ENCODE measurements at regions of chr7 and their contacts with region 1.

Region 1: GRCh38 chr7:100889761-100890634 is 483 bp upstream of the UFSP1 start:
- DNase-seq: peak; percentile 87 to 93 (median 91)
- ATAC-seq: peak; percentile 93
- H3K4me3 ChIP-seq: peak overlapping the region; percentile 80
- H3K4me3 Mint-ChIP-seq: peak overlapping the region; percentile 80 to 90 (median 88)
- H3K27ac ChIP-seq: peak overlapping the region; percentile 66
- H3K27ac Mint-ChIP-seq: peak overlapping the region in 6 of 9 donors; percentile 14 to 95 (median 76)
- H3K4me1 ChIP-seq: peaks cover 31 to 45% of the 10 kb centered on the region in 2 donors
- H3K4me1 Mint-ChIP-seq: peaks cover 32 to 48% (median 41%) of the 10 kb centered on the region in 7 donors
- H3K27me3 ChIP-seq: no peaks in the 10 kb centered on the region
- H3K27me3 Mint-ChIP-seq: peaks cover 16 to 40% (median 22%) of the 10 kb centered on the region in 5 donors

Region 2: DNA sequence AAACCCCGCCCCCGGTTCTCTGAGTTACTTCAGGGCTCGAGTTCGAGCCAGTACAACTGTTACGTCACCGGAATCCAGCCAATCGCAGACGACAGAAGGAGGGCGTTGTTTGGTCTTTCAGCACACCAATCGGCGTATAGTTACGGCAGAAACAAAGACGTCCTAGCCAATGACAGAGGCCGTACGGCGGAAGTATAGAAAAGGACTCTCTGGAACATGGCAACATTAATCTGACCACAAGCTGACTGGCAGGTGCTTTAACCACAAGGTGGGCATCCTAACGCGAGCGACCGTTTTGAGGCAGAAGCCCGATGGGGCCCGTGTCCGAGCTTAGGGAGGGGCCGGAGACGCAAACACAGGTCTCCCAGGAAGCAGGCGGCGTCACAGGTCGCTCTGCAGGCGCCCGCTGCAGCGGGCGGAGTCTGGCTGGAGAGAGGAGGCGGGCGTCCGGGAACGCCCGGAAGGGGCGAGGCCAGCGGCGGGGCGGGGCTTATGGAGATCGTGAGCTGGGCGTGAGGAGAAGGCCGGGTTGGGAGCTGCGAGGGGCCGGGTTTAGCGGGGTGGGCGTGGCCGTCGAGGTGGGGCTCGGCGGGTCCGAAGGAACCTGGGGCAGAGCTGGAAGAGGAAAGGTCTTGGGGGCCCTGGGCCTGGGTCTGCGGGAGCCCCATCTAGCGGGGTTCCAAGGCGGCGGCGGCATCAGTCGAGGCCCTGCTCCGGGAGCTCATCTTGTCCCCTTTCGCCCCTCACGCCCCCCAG is 277.8 kb before region 1 on chr7 and contains the start of gene MOSPD3:
- CTCF ChIA-PET with region 1: no interaction called
- POLR2A ChIA-PET with region 1: no interaction called
- intact Hi-C with region 1: loop called in 1 of 2 experiments (anchors 5 kb)
- DNase-seq: peak; percentile 97 to 99 (median 98)
- ATAC-seq: peak; percentile 94
- H3K4me3 ChIP-seq: peak within 1 kb of the TSS; percentile 99
- H3K4me3 Mint-ChIP-seq: peak within 1 kb of the TSS; percentile 92 to 99 (median 98)
- H3K27ac ChIP-seq: peak within 1 kb of the TSS; percentile 92
- H3K27ac Mint-ChIP-seq: peak within 1 kb of the TSS; percentile 97 to 100 (median 100)
- H3K4me1 ChIP-seq: peaks cover 10 to 16% of the 10 kb centered on the region in 2 donors
- H3K4me1 Mint-ChIP-seq: peaks cover 18 to 29% (median 24%) of the 10 kb centered on the region in 7 donors
- H3K27me3 ChIP-seq: no peaks in the 10 kb centered on the region
- H3K27me3 Mint-ChIP-seq: peaks cover 0 to 8% (median 0%) of the 10 kb centered on the region in 5 donors
- total RNA-seq, gene MOSPD3: 8.8 to 54.9 (median 13.1) TPM

Region 3: GRCh38 chr7:100965723-100966541 is 75.9 kb after region 1 on chr7:
- CTCF ChIA-PET with region 1: no interaction called
- POLR2A ChIA-PET with region 1: no interaction called
- intact Hi-C with region 1: loop called (anchors 5 kb)
- DNase-seq: peak; percentile 21 to 88 (median 52)
- ATAC-seq: peak; percentile 73
- H3K4me3 ChIP-seq: peak overlapping the region; percentile 52
- H3K4me3 Mint-ChIP-seq: peak overlapping the region; percentile 71 to 89 (median 84)
- H3K27ac ChIP-seq: no peak overlapping the region
- H3K27ac Mint-ChIP-seq: peak overlapping the region in 1 of 9 donors; percentile 6
- H3K4me1 ChIP-seq: peaks cover 0 to 17% of the 10 kb centered on the region in 2 donors
- H3K4me1 Mint-ChIP-seq: peaks cover 9 to 24% (median 16%) of the 10 kb centered on the region in 7 donors
- H3K27me3 ChIP-seq: peaks cover 12 to 33% of the 10 kb centered on the region in 2 donors
- H3K27me3 Mint-ChIP-seq: peaks cover 42 to 65% (median 61%) of the 10 kb centered on the region in 5 donors

Region 4: GRCh38 chr7:101085162-101085987 is 195.4 kb after region 1 on chr7 and contains the start of gene TRIM56:
- CTCF ChIA-PET with region 1: interaction called, 3 read pairs
- POLR2A ChIA-PET with region 1: interaction called, 12 read pairs
- intact Hi-C with region 1: no loop called
- DNase-seq: peak; percentile 53 to 77 (median 74)
- ATAC-seq: peak; percentile 94
- H3K4me3 ChIP-seq: peak within 1 kb of the TSS; percentile 100
- H3K4me3 Mint-ChIP-seq: peak within 1 kb of the TSS; percentile 91 to 100 (median 98)
- H3K27ac ChIP-seq: peak within 1 kb of the TSS; percentile 97
- H3K27ac Mint-ChIP-seq: peak within 1 kb of the TSS; percentile 93 to 100 (median 99)
- H3K4me1 ChIP-seq: peaks cover 10 to 15% of the 10 kb centered on the region in 2 donors
- H3K4me1 Mint-ChIP-seq: peaks cover 14 to 43% (median 28%) of the 10 kb centered on the region in 7 donors
- H3K27me3 ChIP-seq: no peaks in the 10 kb centered on the region
- H3K27me3 Mint-ChIP-seq: peaks cover 0 to 6% (median 0%) of the 10 kb centered on the region in 5 donors
- total RNA-seq, gene TRIM56: 49.6 to 72.3 (median 68.0) TPM

Region 5: GRCh38 chr7:101186844-101187428 is 296.9 kb after region 1 on chr7:
- CTCF ChIA-PET with region 1: no interaction called
- POLR2A ChIA-PET with region 1: no interaction called
- intact Hi-C with region 1: loop called in 1 of 2 experiments (anchors 1 kb)
- DNase-seq: no peak
- ATAC-seq: no peak
- H3K4me3 ChIP-seq: no peak overlapping the region
- H3K4me3 Mint-ChIP-seq: no peak overlapping the region
- H3K27ac ChIP-seq: no peak overlapping the region
- H3K27ac Mint-ChIP-seq: no peak overlapping the region
- H3K4me1 ChIP-seq: no peaks in the 10 kb centered on the region
- H3K4me1 Mint-ChIP-seq: peaks cover 0 to 7% (median 4%) of the 10 kb centered on the region in 7 donors
- H3K27me3 ChIP-seq: no peaks in the 10 kb centered on the region
- H3K27me3 Mint-ChIP-seq: peaks cover 20 to 32% (median 23%) of the 10 kb centered on the region in 5 donors

Region 6: GRCh38 chr7:101251871-101252659 is 362.1 kb after region 1 on chr7:
- CTCF ChIA-PET with region 1: no interaction called
- POLR2A ChIA-PET with region 1: no interaction called
- intact Hi-C with region 1: loop called in 1 of 2 experiments (anchors 1 kb)
- DNase-seq: peak; percentile 95 to 98 (median 97)
- ATAC-seq: peak; percentile 100
- H3K4me3 ChIP-seq: peak overlapping the region; percentile 76
- H3K4me3 Mint-ChIP-seq: peak overlapping the region; percentile 94 to 100 (median 99)
- H3K27ac ChIP-seq: peak overlapping the region; percentile 87
- H3K27ac Mint-ChIP-seq: peak overlapping the region; percentile 90 to 99 (median 97)
- H3K4me1 ChIP-seq: peaks cover 13 to 16% of the 10 kb centered on the region in 2 donors
- H3K4me1 Mint-ChIP-seq: peaks cover 28 to 39% (median 32%) of the 10 kb centered on the region in 7 donors
- H3K27me3 ChIP-seq: no peaks in the 10 kb centered on the region
- H3K27me3 Mint-ChIP-seq: peaks cover 0 to 4% (median 0%) of the 10 kb centered on the region in 5 donors

Measured in naive thymus-derived CD4-positive, alpha-beta T cell (primary cell).